ENCODE measurements at regions of chr5 and their contacts with region 1.

Region 1: GRCh38 chr5:168047043-168047668 is 244.3 kb upstream of the WWC1 start:
- DNase-seq: peak; percentile 72
- ATAC-seq: peak; percentile 93
- H3K4me3 Mint-ChIP-seq: 0 out of 2 replicates have a peak overlapping the region, but pooled peaks have one; percentile 13
- H3K27ac Mint-ChIP-seq: no peak overlapping the region; the same call in 1 of the 2 replicates
- H3K4me1 Mint-ChIP-seq: peaks cover 25% of the 10 kb centered on the region
- H3K27me3 Mint-ChIP-seq: no peaks in the 10 kb centered on the region
- CTCF ChIP-seq: no peak; the same call in 1 of the 2 replicates

Region 2: GRCh38 chr5:167587772-167588437 is 459.3 kb before region 1 on chr5:
- CTCF ChIA-PET with region 1: interaction called, 12 read pairs
- POLR2A ChIA-PET with region 1: no interaction called
- DNase-seq: peak; percentile 47
- ATAC-seq: peak; percentile 99
- H3K4me3 Mint-ChIP-seq: no peak overlapping the region
- H3K27ac Mint-ChIP-seq: no peak overlapping the region
- H3K4me1 Mint-ChIP-seq: peaks cover 11% of the 10 kb centered on the region
- H3K27me3 Mint-ChIP-seq: no peaks in the 10 kb centered on the region
- CTCF ChIP-seq: no peak; the same call in 1 of the 2 replicates

Region 3: DNA sequence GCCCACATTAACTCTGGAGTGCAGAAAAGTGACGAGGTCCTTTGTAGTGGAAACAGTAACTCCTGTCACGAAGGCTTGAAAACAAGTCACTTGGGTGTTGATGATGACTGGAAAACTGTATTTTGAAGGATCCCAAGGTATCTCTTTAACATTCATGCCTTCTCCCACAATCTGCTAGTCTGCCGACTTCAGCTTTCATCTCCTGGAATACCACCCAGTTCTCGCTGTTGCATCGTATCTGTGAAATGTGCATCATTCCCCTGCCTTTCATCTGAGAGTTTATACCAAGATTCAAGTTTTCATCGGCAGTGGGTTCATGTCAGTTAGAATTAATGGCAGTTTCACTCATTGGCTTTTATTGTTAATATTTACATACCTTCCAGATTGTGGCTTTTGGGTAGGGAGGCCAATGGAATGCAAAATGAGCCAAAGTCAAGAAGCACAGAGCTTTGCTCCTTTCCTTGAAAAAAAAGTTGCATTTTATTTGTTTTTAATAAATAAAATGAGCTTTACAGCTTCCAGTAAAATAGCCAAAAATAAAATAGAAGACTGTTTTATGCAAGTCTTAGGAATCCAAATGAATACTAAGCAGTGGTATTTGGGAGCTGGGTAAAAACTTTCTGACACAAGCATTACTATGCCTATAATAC is 330.9 kb before region 1 on chr5:
- CTCF ChIA-PET with region 1: interaction called, 10 read pairs
- POLR2A ChIA-PET with region 1: no interaction called
- DNase-seq: no peak
- ATAC-seq: no peak
- H3K4me3 Mint-ChIP-seq: no peak overlapping the region
- H3K27ac Mint-ChIP-seq: no peak overlapping the region
- H3K4me1 Mint-ChIP-seq: peaks cover 9% of the 10 kb centered on the region
- H3K27me3 Mint-ChIP-seq: no peaks in the 10 kb centered on the region; the same call in 1 of the 2 replicates
- CTCF ChIP-seq: no peak

Region 4: DNA sequence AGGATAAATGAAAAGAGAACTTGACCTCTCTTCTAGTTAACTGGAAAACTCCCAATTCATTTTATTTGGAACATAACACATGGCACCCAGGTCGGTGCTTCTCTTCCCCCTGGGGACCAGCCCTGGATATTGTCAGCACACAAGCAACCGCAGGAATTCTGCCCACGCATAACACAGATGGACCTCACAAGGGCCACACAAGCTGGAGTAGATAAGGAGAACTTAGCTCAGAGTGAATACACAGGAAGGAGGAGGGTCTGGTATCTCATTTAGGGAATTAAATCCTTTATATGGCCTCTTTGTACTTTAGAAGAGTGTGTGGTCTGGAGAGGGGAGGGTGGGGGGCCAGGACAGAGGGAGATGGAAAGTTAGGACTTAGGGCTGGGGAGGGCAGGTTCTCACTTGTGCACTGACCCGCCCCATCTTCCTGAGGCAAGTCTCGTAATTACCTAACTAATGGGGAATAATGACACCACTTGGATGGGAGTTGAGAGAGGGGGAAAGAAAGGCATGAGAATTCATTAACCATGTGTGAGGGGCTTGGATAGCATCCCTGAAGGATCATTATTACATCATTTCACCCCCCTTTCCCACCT is 96.9 kb before region 1 on chr5:
- CTCF ChIA-PET with region 1: interaction called, 12 read pairs
- POLR2A ChIA-PET with region 1: no interaction called
- DNase-seq: no peak
- ATAC-seq: no peak
- H3K4me3 Mint-ChIP-seq: no peak overlapping the region
- H3K27ac Mint-ChIP-seq: peak overlapping the region; percentile 20; the same call in 1 of the 2 replicates
- H3K4me1 Mint-ChIP-seq: peaks cover 41% of the 10 kb centered on the region
- H3K27me3 Mint-ChIP-seq: no peaks in the 10 kb centered on the region
- CTCF ChIP-seq: no peak

Region 5: DNA sequence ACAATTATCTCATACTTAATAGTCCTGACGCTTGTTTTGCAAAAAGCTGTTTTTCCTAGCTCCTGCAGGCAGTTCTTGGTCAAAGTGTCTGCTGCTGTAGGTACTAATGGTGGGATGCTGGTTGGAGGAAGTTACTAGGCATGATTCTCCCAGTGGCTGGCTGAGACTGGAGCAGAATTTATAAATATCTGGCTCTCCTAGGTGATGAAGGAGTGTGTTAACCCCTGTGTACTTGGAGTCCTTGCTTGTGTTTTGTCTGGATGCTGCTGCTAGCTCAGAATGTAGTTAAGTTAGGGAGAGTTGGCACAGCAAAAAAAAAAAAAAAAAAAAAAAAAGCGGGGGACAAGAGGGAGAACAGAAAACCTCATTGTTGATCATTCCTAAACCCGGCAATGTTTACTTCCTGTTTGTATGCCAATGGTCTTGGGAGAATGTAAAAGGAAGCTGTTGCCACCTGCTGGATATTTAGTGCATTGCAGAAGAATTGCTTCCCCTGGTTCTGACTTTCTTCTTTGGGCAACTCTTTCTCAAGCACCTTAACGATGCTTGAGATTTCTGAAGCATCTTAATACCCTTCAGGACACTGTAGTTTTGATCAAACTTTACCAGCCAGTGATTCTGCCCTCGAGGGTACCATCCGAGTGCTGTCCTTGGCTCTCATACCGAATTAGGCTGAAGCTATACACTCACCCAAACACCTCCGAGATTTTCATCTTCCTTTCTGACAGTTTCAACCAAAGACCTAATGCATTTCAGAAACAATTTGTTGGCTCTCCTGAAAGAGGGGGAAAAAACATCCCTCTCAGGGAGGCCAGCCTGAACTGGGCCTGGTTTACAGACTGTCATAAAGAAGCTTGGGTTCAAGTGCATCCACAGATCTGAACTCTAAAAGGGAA is 172.6 kb after region 1 on chr5:
- CTCF ChIA-PET with region 1: interaction called, 18 read pairs
- POLR2A ChIA-PET with region 1: no interaction called
- DNase-seq: peak; percentile 59
- ATAC-seq: peak; percentile 72
- H3K4me3 Mint-ChIP-seq: no peak overlapping the region
- H3K27ac Mint-ChIP-seq: no peak overlapping the region; the same call in 1 of the 2 replicates
- H3K4me1 Mint-ChIP-seq: peaks cover 39% of the 10 kb centered on the region
- H3K27me3 Mint-ChIP-seq: no peaks in the 10 kb centered on the region
- CTCF ChIP-seq: peak; percentile 79

Measured in WTC11 (cell line).